Gastrocnemius medialis (tissue), 4 donors: ENCODE measurements at regions of chr15 and their contacts with region 1.

Region 1: DNA sequence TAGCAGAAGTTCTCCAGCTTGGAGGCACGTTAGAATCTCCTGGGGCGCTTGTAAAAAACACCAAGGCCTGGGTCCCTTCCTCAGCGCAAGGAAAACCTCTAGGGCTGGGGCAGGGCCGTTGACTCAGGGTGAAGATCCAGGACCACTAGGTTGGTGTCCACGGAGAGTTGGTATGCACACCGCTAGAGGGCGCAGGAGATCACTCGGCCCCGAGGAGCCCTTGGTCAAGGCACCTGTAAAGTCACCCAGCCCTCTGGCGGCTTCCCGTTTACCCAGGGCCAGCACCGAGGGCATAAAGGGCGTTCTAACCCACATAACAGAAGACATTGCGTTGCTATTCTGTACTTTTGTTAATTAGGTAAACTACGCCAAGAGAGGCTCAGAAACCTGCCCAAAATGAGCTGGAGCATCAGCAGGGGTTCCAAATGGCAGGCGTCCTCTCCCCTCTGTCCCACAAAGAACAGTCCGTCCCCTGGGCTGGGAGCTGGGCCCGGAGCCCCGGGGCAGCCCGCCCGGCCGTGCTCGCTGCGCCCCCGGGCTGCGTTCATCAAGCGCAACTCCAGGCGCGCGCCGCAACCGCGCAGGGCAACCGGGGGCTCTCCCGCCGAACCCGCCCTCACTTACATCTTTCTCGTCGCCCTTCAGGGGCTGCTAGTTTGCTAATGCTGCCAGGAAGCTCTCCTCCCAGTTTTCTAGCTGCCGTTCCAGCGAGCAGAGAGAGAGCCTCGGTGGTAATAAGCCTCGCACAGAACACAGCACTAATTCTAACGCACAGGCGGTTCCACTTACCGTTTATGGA is 332.1 kb downstream of the ARRDC4 start:
- DNase-seq: no peak
- ATAC-seq: no peak
- H3K4me3 ChIP-seq: no peak overlapping the region
- H3K27ac ChIP-seq: no peak overlapping the region
- H3K4me1 ChIP-seq: no peaks in the 10 kb centered on the region
- H3K27me3 ChIP-seq: peaks cover 15 to 34% (median 22%) of the 10 kb centered on the region in 3 donors
- CTCF ChIP-seq: peak in 3 of 5 experiments; percentile 12 to 51 (median 22)
- POLR2A ChIP-seq: no peak

Region 2: GRCh38 chr15:97903971-97904572 is 388.6 kb before region 1 on chr15:
- in situ Hi-C with region 1: loop called in 3 of 4 experiments (anchors 25 kb)
- intact Hi-C with region 1: loop called (anchors 2 kb)
- DNase-seq: peak; percentile 18 to 22
- ATAC-seq: peak in 1 of 2 donors; percentile 41
- H3K4me3 ChIP-seq: no peak overlapping the region
- H3K27ac ChIP-seq: no peak overlapping the region
- H3K4me1 ChIP-seq: peaks cover 0 to 2% of the 10 kb centered on the region in 2 donors
- H3K27me3 ChIP-seq: peaks cover 24 to 40% (median 27%) of the 10 kb centered on the region in 3 donors
- CTCF ChIP-seq: peak in 4 of 5 experiments; percentile 34 to 62 (median 48)
- POLR2A ChIP-seq: no peak

Region 3: GRCh38 chr15:98311566-98312188 is 19.0 kb after region 1 on chr15:
- in situ Hi-C with region 1: no loop called
- intact Hi-C with region 1: no loop called
- DNase-seq: peak; percentile 23 to 55
- ATAC-seq: no peak
- H3K4me3 ChIP-seq: no peak overlapping the region
- H3K27ac ChIP-seq: no peak overlapping the region
- H3K4me1 ChIP-seq: no peaks in the 10 kb centered on the region
- H3K27me3 ChIP-seq: no peaks in the 10 kb centered on the region
- CTCF ChIP-seq: peak; percentile 32 to 75 (median 65)
- POLR2A ChIP-seq: no peak

Region 4: GRCh38 chr15:98382139-98382538 is 89.5 kb after region 1 on chr15:
- in situ Hi-C with region 1: no loop called
- intact Hi-C with region 1: no loop called
- DNase-seq: no peak
- ATAC-seq: no peak
- H3K4me3 ChIP-seq: no peak overlapping the region
- H3K27ac ChIP-seq: no peak overlapping the region
- H3K4me1 ChIP-seq: no peaks in the 10 kb centered on the region
- H3K27me3 ChIP-seq: peaks cover 0 to 3% (median 3%) of the 10 kb centered on the region in 3 donors
- CTCF ChIP-seq: no peak
- POLR2A ChIP-seq: no peak